Transverse colon (tissue), 4 donors: ENCODE measurements at regions of chr3 and their contacts with region 1.

Region 1: DNA sequence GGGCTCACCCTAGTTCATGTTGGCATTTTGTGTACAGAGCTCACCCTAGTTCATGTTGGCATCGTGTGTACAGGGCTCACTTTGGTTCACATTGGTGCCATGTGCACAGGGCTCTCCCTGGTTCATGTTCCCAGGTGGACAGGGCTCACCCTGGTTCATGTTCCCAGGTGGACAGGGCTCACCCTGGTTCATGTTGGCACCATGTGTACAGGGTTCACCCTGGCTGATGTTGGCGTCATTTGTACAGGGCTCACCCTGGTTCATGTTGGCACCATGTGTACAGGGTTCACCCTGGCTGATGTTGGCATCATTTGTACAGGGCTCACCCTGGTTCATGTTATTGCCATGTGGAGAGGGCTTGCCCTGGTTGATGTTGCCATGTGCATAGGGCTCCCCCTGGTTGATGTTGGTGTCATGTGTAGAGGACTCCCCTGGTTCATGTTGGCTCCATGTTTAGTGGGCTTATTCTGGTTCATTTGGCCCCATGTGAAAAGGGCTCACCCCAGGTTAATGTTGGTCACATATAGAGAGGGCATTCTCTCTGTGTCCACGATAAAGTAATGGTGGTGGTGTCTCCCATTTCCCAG is 31.7 kb upstream of the NR2C2 start:
- DNase-seq: no peak
- H3K4me3 ChIP-seq: no peak overlapping the region
- H3K27ac ChIP-seq: no peak overlapping the region
- H3K4me1 ChIP-seq: peaks cover 0 to under 1% (median 0%) of the 10 kb centered on the region in 4 donors
- H3K27me3 ChIP-seq: no peaks in the 10 kb centered on the region
- CTCF ChIP-seq: peak in 4 of 5 experiments; percentile 14 to 29 (median 20)
- EP300 ChIP-seq: no peak
- POLR2A ChIP-seq: no peak

Region 2: GRCh38 chr3:14678015-14678503 is 237.7 kb before region 1 on chr3:
- in situ Hi-C with region 1: loop called (anchors 10 kb)
- intact Hi-C with region 1: loop called (anchors 5 kb)
- DNase-seq: no peak
- H3K4me3 ChIP-seq: no peak overlapping the region
- H3K27ac ChIP-seq: no peak overlapping the region
- H3K4me1 ChIP-seq: no peaks in the 10 kb centered on the region
- H3K27me3 ChIP-seq: no peaks in the 10 kb centered on the region
- CTCF ChIP-seq: no peak
- EP300 ChIP-seq: no peak
- POLR2A ChIP-seq: no peak

Region 3: GRCh38 chr3:14780927-14781507 is 134.7 kb before region 1 on chr3:
- in situ Hi-C with region 1: loop called in 1 of 4 experiments (anchors 10 kb)
- intact Hi-C with region 1: no loop called
- DNase-seq: peak; percentile 62
- H3K4me3 ChIP-seq: no peak overlapping the region
- H3K27ac ChIP-seq: no peak overlapping the region
- H3K4me1 ChIP-seq: no peaks in the 10 kb centered on the region
- H3K27me3 ChIP-seq: no peaks in the 10 kb centered on the region
- CTCF ChIP-seq: peak; percentile 39 to 58 (median 50)
- EP300 ChIP-seq: no peak
- POLR2A ChIP-seq: no peak

Region 4: DNA sequence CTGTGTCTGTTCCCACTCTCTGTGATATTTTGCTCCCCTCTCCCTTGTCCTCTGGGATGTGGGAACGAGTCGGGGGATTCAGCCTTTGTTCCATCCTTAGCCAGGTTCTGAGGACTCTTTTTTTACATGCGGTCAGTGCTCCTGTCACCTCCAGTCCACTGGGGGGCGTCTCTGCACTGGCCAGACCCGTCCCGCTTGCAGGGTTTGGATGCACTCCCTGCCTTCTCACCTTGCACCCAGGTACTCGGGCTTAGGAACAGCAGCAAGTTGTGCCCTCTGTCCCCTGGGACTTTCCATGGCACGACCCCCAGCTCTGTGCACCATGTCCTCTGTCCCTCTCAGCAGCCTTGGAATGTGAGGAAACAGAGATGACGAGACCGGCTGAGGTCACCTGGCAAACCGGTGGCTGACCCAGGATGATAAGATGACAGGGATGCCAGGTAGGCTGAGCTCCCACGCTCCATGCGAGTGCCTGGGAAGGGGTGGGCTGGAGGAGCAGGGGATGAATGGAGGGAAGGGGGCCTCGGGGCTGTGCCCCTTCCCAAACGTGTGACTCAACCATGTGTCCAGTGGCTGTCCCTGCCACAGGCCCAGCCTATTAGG is 124.3 kb before region 1 on chr3:
- in situ Hi-C with region 1: loop called in 3 of 4 experiments (anchors 10 kb)
- intact Hi-C with region 1: no loop called
- DNase-seq: peak; percentile 74
- H3K4me3 ChIP-seq: no peak overlapping the region
- H3K27ac ChIP-seq: no peak overlapping the region
- H3K4me1 ChIP-seq: no peaks in the 10 kb centered on the region
- H3K27me3 ChIP-seq: no peaks in the 10 kb centered on the region
- CTCF ChIP-seq: peak; percentile 54 to 75 (median 68)
- EP300 ChIP-seq: no peak
- POLR2A ChIP-seq: no peak